Left colon (tissue), 2 donors: ENCODE measurements at regions of chr6 and their contacts with region 1.

Region 1: DNA sequence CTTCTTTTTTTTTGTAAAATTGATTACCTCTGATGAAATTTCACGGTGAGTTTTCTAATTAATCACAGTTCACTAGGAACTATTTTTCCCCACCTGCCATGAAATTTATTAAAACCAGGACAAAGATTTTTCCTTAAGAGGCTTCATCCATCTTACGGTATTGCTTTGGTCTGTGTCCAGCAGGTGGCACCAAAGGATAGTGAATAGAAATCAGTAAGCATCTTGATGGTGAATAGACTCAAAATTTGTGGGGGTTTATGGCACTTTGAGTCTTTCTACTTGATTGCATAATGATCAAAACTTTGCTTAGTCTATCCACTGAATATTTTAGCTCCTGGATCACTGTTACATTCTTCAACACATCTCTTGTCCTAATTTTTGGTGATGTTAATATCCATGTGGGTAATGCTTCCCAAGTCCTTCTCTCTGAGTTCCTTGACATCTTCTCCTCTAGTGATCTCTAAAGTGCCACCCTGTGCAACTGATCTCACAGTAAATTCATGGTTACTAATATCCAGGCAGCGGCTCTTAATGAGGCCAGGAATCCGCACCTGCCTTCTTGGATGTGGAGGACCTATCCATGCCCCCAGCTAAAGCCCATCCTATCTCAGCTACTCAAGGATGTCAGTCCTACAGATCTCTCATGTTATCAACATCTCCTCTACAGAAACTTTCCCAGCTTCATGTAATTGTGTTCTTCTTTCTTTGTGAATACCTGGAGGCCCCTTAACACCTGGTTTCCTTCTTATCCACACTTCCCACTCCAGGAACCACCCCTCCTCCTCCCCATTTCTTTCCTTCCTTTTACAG is 54.5 kb downstream of the STMND1 start:
- DNase-seq: peak in 1 of 2 donors; percentile 81
- ATAC-seq: peak; percentile 31

Region 2: GRCh38 chr6:17803409-17803808 is 647.1 kb after region 1 on chr6:
- intact Hi-C with region 1: loop called in 1 of 2 experiments (anchors 5 kb)
- DNase-seq: no peak
- ATAC-seq: no peak